Activated B cell treated with CpG ODN at 0.5 μM for 24 hours (primary cell): ENCODE measurements at regions of chr1 and their contacts with region 1.

Region 1: DNA sequence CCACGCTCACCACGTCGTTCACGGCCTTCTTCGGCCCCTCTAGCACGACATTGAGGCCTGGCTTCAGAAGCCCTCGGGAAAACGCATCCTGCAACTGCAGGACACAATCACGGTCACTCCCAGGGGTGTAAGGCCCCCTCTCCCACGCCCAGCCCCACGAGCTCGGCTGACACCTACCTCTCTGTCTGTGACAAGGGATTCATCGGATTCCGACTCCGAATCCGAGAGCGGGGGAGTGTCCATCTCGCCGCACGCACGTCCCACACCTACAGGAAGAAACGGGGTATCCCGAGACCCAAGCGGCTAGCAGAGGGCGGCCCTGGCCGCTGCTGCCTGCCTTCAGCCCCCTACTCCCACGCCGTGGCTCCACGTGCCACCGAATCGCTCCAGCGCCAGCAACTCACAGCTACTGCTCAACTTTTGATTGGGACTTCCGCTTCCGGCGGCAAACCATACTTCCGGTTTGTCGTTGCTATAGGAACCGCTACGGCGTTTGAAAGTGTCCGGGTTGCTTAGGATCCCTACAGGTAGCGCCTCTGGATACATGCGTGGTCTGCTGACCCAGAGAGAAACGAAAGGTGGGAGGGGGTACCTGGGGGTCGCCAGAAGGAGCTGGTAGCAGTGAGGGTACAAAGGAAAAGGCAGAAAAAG is at the starts of genes CFAP57 and EBNA1BP2:
- DNase-seq: peak; percentile 84
- ATAC-seq: peak; percentile 82
- H3K4me3 Mint-ChIP-seq: peak within 1 kb of the TSS; percentile 99
- H3K27ac Mint-ChIP-seq: peak within 1 kb of the TSS; percentile 95
- H3K4me1 Mint-ChIP-seq: peaks cover 32% of the 10 kb centered on the region
- H3K27me3 Mint-ChIP-seq: peaks cover 20% of the 10 kb centered on the region
- CTCF ChIP-seq: no peak
- total RNA-seq, gene CFAP57: 0.93 TPM in 1 of 2 replicates, not detected in the other
- total RNA-seq, gene EBNA1BP2: 59.9 and 61.8 TPM in 2 replicates

Region 2: GRCh38 chr1:42420911-42421585 is 751.0 kb before region 1 on chr1:
- CTCF ChIA-PET with region 1: no interaction called
- POLR2A ChIA-PET with region 1: no interaction called
- intact Hi-C with region 1: no loop called
- DNase-seq: no peak
- ATAC-seq: no peak
- H3K4me3 Mint-ChIP-seq: no peak overlapping the region
- H3K27ac Mint-ChIP-seq: no peak overlapping the region
- H3K4me1 Mint-ChIP-seq: no peaks in the 10 kb centered on the region
- H3K27me3 Mint-ChIP-seq: peaks cover 22% of the 10 kb centered on the region
- CTCF ChIP-seq: no peak

Region 3: GRCh38 chr1:42462828-42463763 is 708.9 kb before region 1 on chr1 and contains the start of gene CCDC30:
- CTCF ChIA-PET with region 1: no interaction called
- POLR2A ChIA-PET with region 1: no interaction called
- intact Hi-C with region 1: loop called (anchors 1 kb)
- DNase-seq: peak; percentile 86
- ATAC-seq: peak; percentile 98
- H3K4me3 Mint-ChIP-seq: peak within 1 kb of the TSS; percentile 88
- H3K27ac Mint-ChIP-seq: peak within 1 kb of the TSS; percentile 90
- H3K4me1 Mint-ChIP-seq: peaks cover 31% of the 10 kb centered on the region
- H3K27me3 Mint-ChIP-seq: no peaks in the 10 kb centered on the region
- CTCF ChIP-seq: no peak
- total RNA-seq, gene CCDC30: 3.5 and 4.3 TPM in 2 replicates

Region 4: GRCh38 chr1:42846257-42847110 is 325.5 kb before region 1 on chr1 and contains the start of gene ZNF691:
- CTCF ChIA-PET with region 1: no interaction called
- POLR2A ChIA-PET with region 1: interaction called, 4 read pairs
- intact Hi-C with region 1: loop called (anchors 1 kb)
- DNase-seq: peak; percentile 63
- ATAC-seq: peak; percentile 97
- H3K4me3 Mint-ChIP-seq: peak within 1 kb of the TSS; percentile 94
- H3K27ac Mint-ChIP-seq: peak within 1 kb of the TSS; percentile 83
- H3K4me1 Mint-ChIP-seq: peaks cover 43% of the 10 kb centered on the region
- H3K27me3 Mint-ChIP-seq: no peaks in the 10 kb centered on the region
- CTCF ChIP-seq: no peak
- total RNA-seq, gene ZNF691: 13.1 and 16.1 TPM in 2 replicates

Region 5: DNA sequence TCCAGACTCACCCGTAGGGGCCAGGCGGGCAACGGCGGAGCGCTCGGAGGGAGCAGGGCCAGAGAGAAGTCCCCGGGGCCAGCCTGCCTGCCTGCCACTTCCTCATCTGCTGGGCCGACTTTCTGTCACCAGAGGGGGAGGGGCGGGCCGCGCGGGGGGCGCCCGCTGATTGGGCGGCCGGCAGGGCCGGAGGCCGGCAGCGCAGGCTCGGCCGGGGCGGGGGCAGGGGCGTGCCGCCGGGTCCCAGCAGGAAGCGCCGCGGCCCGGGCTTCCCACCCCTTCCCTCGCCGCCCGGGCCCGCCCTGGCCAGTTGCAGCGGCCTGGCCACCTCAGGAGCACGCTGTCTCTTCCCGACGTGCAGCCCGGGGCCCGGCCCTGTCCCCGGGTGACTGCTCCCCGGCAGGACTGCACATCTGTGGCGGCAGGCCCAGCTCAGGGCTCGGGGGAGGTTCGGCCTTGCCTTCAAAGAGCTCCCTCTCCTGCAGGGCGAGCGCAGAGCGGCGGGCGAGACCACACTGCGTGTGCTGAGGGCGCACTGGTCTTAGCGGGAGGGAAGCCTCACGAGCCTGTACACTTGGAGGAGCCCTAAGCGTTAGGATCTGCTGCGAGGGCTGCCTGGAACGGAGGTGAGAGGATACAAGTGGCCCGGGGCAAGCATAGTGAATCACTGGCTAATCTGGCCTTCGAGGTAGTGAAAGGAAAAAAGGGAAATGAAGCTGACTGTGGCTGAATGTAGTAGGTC is 196.1 kb after region 1 on chr1 and contains the start of gene ELOVL1:
- CTCF ChIA-PET with region 1: no interaction called
- POLR2A ChIA-PET with region 1: interaction called, 7 read pairs
- intact Hi-C with region 1: loop called (anchors 1 kb)
- DNase-seq: peak; percentile 92
- ATAC-seq: peak; percentile 87
- H3K4me3 Mint-ChIP-seq: peak within 1 kb of the TSS; percentile 93
- H3K27ac Mint-ChIP-seq: peak within 1 kb of the TSS; percentile 97
- H3K4me1 Mint-ChIP-seq: peaks cover 42% of the 10 kb centered on the region
- H3K27me3 Mint-ChIP-seq: no peaks in the 10 kb centered on the region
- CTCF ChIP-seq: no peak
- total RNA-seq, gene ELOVL1: 80.2 and 84.2 TPM in 2 replicates

Region 6: DNA sequence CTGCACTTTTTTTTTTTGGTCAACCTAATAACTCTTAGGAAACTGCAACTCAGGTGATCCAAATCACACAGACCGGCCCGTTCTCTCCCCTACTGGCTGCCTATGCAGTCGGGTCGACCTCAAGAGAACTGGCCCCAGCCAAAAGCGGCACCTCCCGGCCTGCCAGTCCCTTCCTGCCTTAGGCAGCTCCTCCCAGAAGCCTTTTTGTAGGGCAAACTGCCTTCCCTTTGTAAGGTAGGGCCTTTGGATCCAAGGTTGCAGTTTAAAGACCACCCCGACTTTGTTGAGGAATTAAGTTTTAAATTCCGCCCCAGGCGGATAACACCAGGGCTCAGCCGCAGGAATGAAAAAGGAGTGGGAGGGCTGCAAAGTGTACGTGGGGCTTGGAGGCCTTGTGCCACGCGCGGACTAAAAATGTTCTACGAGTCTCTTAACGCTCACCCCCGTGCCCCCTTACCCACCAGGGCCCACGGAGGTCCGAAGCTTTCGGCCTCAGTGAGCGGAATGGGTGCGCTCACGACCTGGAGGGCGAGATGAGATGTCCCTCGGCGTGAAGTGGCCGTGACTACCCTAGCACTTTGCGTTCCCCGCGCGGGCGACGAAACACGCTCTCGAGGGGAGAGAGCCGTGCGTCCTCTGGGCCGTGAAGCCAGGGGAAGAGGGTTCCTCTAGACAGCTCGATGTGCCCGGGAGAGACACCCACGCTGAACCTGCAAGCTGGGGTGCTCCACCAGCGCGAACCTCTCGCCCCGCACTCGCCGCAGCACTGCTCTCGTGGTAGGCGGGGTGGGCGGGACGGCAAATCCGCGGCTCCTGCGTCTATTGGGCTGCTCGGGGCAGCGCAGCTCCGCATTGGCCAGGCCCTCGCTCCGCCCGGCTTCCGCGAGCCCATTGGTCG is 534.8 kb after region 1 on chr1:
- CTCF ChIA-PET with region 1: no interaction called
- POLR2A ChIA-PET with region 1: no interaction called
- intact Hi-C with region 1: loop called (anchors 5 kb)
- DNase-seq: no peak
- ATAC-seq: peak; percentile 97
- H3K4me3 Mint-ChIP-seq: peak overlapping the region; percentile 86
- H3K27ac Mint-ChIP-seq: peak overlapping the region; percentile 63
- H3K4me1 Mint-ChIP-seq: peaks cover 33% of the 10 kb centered on the region
- H3K27me3 Mint-ChIP-seq: no peaks in the 10 kb centered on the region
- CTCF ChIP-seq: no peak